ENCODE measurements at regions of chr5 and their contacts with region 1.

Region 1: DNA sequence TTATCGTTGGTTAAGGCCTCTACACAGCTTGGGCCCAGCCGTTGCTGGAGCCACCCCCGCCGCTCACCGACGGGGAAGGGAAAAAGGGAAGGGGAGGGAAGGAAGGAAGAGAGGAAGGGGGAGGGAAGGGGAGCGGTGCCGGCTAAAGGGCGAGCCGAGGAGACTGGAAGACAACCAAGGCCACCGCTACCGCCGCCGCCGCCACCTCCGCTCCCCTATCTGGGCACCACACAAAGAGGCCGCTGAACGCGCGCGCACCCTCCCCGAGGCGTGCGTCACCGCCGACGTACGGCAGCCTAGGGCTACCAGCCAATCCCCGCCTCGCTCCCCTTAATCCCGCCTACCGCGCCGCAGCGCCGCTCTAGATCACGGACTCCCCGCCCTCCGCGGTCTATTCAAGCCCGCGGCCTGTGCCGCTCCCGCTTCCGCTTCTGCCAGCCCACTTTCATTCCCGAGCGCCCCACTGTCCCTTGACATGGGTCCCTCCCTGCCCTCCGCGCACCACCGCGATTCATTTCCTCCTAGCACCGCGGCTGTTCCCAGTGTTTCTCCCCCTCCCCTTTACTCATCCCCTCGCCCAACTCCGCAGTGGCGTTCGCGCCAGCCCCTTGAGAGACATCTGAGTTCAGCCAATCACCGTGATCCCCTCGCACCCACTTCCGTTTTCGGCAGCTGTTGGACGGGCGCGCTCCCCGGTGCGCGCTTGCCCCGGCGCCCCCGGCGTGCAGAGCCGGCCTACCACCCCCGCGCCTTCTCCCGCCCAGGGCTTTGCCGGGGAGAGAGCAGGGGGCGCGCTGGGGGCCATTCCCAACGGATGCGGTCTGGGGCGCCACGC is at the start of gene HNRNPA0:
- DNase-seq: peak; percentile 91 to 96
- H3K4me3 ChIP-seq: peak within 1 kb of the TSS; percentile 88
- H3K4me1 ChIP-seq: peaks cover 5% of the 10 kb centered on the region; the same call in 1 of the 2 replicates
- H3K27me3 ChIP-seq: no peaks in the 10 kb centered on the region

Region 2: GRCh38 chr5:138138949-138139780 is 384.8 kb after region 1 on chr5 and contains the start of gene NME5:
- in situ Hi-C with region 1: loop called (anchors 25 kb)
- DNase-seq: no peak
- H3K4me3 ChIP-seq: no peak within 1 kb of the TSS
- H3K4me1 ChIP-seq: no peaks in the 10 kb centered on the region
- H3K27me3 ChIP-seq: no peaks in the 10 kb centered on the region